Activated CD8-positive, alpha-beta T cell treated with anti-CD3 and anti-CD28 coated beads, Interleukin-2, amount 10 ng/mL, durations not matched to agents 7 days and 5 days (primary cell): ENCODE measurements at regions of chr17 and their contacts with region 1.

Region 1: GRCh38 chr17:76623271-76624146 is 20.0 kb downstream of the ST6GALNAC1 start:
- DNase-seq: peak; percentile 82
- ATAC-seq: peak; percentile 93
- H3K4me3 Mint-ChIP-seq: no peak overlapping the region
- H3K27ac Mint-ChIP-seq: no peak overlapping the region
- H3K4me1 Mint-ChIP-seq: peaks cover 3% of the 10 kb centered on the region
- H3K27me3 Mint-ChIP-seq: peaks cover 15% of the 10 kb centered on the region

Region 2: GRCh38 chr17:76327696-76328095 is 295.8 kb before region 1 on chr17:
- CTCF ChIA-PET with region 1: no interaction called
- POLR2A ChIA-PET with region 1: no interaction called
- DNase-seq: no peak
- ATAC-seq: no peak
- H3K4me3 Mint-ChIP-seq: no peak overlapping the region
- H3K27ac Mint-ChIP-seq: no peak overlapping the region
- H3K4me1 Mint-ChIP-seq: no peaks in the 10 kb centered on the region
- H3K27me3 Mint-ChIP-seq: no peaks in the 10 kb centered on the region

Region 3: GRCh38 chr17:76397687-76398487 is 225.6 kb before region 1 on chr17:
- CTCF ChIA-PET with region 1: no interaction called
- POLR2A ChIA-PET with region 1: no interaction called
- DNase-seq: peak; percentile 89
- ATAC-seq: peak; percentile 89
- H3K4me3 Mint-ChIP-seq: no peak overlapping the region
- H3K27ac Mint-ChIP-seq: peak overlapping the region; percentile 47
- H3K4me1 Mint-ChIP-seq: no peaks in the 10 kb centered on the region
- H3K27me3 Mint-ChIP-seq: no peaks in the 10 kb centered on the region

Region 4: GRCh38 chr17:76523084-76524037 is 100.1 kb before region 1 on chr17:
- CTCF ChIA-PET with region 1: interaction called, 71 read pairs
- POLR2A ChIA-PET with region 1: no interaction called
- DNase-seq: peak; percentile 86
- ATAC-seq: peak; percentile 88
- H3K4me3 Mint-ChIP-seq: peak overlapping the region; percentile 51
- H3K27ac Mint-ChIP-seq: peak overlapping the region; percentile 65
- H3K4me1 Mint-ChIP-seq: peaks cover 28% of the 10 kb centered on the region
- H3K27me3 Mint-ChIP-seq: no peaks in the 10 kb centered on the region

Region 5: GRCh38 chr17:76557368-76558197 is 65.9 kb before region 1 on chr17:
- CTCF ChIA-PET with region 1: interaction called, 82 read pairs
- POLR2A ChIA-PET with region 1: no interaction called
- DNase-seq: peak; percentile 97
- ATAC-seq: peak; percentile 94
- H3K4me3 Mint-ChIP-seq: peak overlapping the region; percentile 100
- H3K27ac Mint-ChIP-seq: peak overlapping the region; percentile 99
- H3K4me1 Mint-ChIP-seq: peaks cover 55% of the 10 kb centered on the region
- H3K27me3 Mint-ChIP-seq: no peaks in the 10 kb centered on the region

Region 6: GRCh38 chr17:76578344-76578979 is 45.0 kb before region 1 on chr17:
- CTCF ChIA-PET with region 1: interaction called, 11 read pairs
- POLR2A ChIA-PET with region 1: no interaction called
- DNase-seq: no peak
- ATAC-seq: no peak
- H3K4me3 Mint-ChIP-seq: no peak overlapping the region
- H3K27ac Mint-ChIP-seq: no peak overlapping the region
- H3K4me1 Mint-ChIP-seq: peaks cover 6% of the 10 kb centered on the region
- H3K27me3 Mint-ChIP-seq: peaks cover 7% of the 10 kb centered on the region

Region 7: DNA sequence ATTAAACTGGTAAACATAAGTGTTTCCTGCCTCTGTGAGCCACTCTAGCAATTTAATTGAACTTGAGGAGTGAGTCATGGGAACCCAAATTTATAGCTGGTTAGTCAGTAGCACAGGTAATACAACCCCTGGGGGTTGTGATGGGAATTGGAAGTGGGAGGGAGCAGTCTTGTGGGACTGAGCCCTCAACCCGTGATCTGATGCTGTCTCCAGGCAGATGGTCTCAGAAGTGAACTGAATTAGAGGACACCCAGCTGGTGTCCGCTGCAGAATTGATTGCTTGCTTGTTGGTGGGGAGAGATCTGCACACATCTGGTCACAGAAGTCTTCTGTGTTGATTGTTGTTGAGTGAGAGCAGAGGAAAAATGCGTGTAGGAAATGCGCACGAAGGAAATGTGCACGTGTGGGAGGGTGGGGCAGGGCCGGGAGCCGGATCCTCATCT is 30.1 kb before region 1 on chr17:
- CTCF ChIA-PET with region 1: interaction called, 15 read pairs
- POLR2A ChIA-PET with region 1: no interaction called
- DNase-seq: no peak
- ATAC-seq: no peak
- H3K4me3 Mint-ChIP-seq: no peak overlapping the region
- H3K27ac Mint-ChIP-seq: no peak overlapping the region
- H3K4me1 Mint-ChIP-seq: no peaks in the 10 kb centered on the region
- H3K27me3 Mint-ChIP-seq: peaks cover 28% of the 10 kb centered on the region

Region 8: DNA sequence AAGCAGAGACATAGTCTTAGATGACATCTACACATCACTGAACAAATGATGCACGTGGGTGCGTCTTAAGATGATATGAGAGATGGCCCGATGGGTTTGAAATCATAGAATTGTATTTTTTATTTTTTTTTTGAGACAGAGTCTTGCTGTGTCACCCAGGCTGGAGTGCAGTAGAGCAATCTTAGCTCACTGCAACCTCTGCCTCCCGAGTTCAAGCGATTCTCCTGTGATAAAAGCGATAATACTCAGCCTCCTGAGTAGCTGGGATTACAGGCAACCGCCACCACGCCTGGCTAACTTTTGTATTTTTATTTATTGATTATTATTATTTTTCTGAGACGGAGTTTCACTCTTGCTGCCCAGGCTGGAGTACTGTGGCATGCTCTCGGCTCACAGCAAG is 14.8 kb after region 1 on chr17:
- CTCF ChIA-PET with region 1: interaction called, 18 read pairs
- POLR2A ChIA-PET with region 1: no interaction called
- DNase-seq: no peak
- ATAC-seq: no peak
- H3K4me3 Mint-ChIP-seq: no peak overlapping the region
- H3K27ac Mint-ChIP-seq: no peak overlapping the region
- H3K4me1 Mint-ChIP-seq: peaks cover under 1% of the 10 kb centered on the region
- H3K27me3 Mint-ChIP-seq: peaks cover 5% of the 10 kb centered on the region

Region 9: DNA sequence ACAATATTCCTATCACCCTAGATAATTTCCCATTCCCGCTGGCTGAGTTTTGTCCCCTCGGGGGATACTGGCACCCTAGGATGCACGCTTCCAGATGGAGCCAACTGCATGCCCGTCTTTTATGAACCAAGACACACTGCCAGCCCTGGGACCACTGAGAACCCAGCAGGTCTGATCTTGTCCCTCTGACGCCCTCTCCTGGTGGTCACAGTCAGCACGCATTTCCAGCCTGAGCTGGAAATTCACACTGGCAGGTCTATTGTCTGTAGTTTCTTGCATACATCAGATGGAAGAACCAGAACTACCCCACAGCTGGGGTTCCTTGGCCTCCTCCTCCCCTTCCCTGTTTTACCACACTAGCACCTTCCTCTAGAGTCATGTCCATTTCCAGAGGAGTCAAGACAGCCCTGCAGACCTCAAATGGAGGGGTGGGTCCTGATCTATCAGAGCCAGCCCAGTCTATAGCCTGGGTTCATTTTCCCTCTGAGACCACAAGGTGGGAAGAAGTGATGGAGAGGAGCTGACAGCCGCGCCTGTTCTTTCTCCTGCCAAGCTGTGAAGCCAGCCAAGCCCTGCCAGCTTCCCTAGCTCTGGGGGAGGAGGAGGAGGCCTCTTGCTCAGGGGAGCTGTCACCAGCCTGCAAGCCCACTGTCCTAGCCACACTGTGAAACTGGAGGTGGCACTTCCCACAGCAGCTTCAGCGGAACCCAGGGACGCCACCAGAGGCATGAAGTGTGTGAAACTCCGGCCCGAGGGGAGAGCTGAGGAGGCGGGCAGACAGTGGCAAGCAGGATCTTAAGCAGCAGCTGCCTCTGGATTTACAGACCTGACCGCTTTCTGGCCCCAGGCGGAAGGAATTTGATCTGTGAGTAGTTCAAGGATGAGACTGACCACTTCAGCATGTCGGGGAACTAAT is 58.0 kb after region 1 on chr17:
- CTCF ChIA-PET with region 1: interaction called, 46 read pairs
- POLR2A ChIA-PET with region 1: interaction called, 3 read pairs
- DNase-seq: peak; percentile 86
- ATAC-seq: peak; percentile 66
- H3K4me3 Mint-ChIP-seq: no peak overlapping the region
- H3K27ac Mint-ChIP-seq: no peak overlapping the region
- H3K4me1 Mint-ChIP-seq: peaks cover 10% of the 10 kb centered on the region
- H3K27me3 Mint-ChIP-seq: peaks cover 2% of the 10 kb centered on the region